ENCODE measurements at regions of chr11 and their contacts with region 1.

Region 1: DNA sequence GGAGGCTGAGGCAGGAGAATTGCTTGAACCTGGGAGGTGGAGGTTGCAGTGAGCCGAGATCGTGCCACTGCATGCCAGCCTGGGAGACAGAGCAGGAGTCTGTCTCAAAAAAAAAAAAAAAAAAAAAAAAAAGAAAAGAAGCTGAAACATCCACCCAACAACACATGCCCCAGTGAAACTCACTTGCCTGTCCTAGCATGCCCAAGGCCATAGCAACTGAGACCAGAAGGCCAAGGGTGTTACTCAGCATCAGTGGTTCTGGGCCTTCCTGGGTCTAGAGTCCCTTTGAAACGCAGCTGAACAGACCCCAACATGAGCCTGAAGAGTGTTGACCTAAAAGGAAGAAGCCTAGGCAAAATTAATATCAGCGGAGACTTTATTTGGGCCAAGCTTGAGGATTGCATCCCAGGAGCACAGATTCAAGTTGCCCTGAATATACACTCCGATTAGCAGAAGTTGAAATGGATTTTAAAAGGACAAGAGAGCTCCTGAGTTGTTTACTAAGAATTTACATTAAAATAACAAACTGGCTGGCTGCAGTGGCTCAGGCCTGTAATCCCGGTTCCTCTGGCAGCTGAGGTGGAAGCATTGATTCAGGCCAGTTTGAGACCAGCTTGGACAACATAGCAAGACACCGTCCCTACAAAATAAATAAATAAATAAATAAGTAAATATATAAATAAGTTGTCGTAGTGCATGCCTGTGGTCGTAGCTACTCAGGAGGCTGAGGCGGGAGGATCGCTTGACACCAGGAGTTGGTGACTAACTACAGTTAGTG is 7.0 kb downstream of the PRDX5 start:
- DNase-seq: no peak
- ATAC-seq: peak; percentile 66
- H3K4me3 ChIP-seq: no peak overlapping the region
- H3K27ac ChIP-seq: no peak overlapping the region
- H3K4me1 ChIP-seq: no peaks in the 10 kb centered on the region
- H3K27me3 ChIP-seq: no peaks in the 10 kb centered on the region
- CTCF ChIP-seq: no peak
- EP300 ChIP-seq: no peak
- POLR2A ChIP-seq: no peak
- RAD21 ChIP-seq: no peak

Region 2: DNA sequence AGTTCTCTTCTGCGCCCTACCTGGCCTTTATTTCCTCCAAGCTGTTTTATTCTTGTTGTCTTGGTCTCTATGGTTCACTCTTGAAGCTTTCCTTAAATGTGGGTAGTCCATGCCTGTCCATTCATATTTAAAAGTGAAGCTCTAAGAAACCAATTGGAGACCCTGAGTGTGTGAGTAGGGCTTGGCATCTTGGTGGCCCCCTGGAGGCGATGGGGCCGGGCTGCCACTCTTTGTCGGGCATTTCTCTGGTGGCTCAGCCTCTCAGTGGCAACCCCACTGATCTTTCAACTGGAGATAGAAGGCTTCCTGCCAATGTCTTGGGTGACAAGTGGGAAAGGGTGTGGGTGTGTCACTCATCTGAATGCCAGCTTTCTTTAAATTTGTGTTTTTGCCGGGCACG is 108.0 kb before region 1 on chr11:
- CTCF ChIA-PET with region 1: no interaction called
- POLR2A ChIA-PET with region 1: interaction called, 11 read pairs
- RAD21 ChIA-PET with region 1: no interaction called
- SMC1A ChIA-PET with region 1: no interaction called
- in situ Hi-C with region 1: no loop called
- intact Hi-C with region 1: no loop called
- DNase-seq: no peak
- ATAC-seq: peak; percentile 25; the same call in 1 of the 3 replicates
- H3K4me3 ChIP-seq: no peak overlapping the region
- H3K27ac ChIP-seq: no peak overlapping the region
- H3K4me1 ChIP-seq: no peaks in the 10 kb centered on the region; the same call in 1 of the 2 replicates
- H3K27me3 ChIP-seq: no peaks in the 10 kb centered on the region
- CTCF ChIP-seq: no peak
- EP300 ChIP-seq: no peak
- POLR2A ChIP-seq: no peak
- RAD21 ChIP-seq: no peak

Region 3: GRCh38 chr11:64251016-64251752 is 73.7 kb before region 1 on chr11 and contains the start of gene PLCB3:
- CTCF ChIA-PET with region 1: no interaction called
- POLR2A ChIA-PET with region 1: no interaction called
- RAD21 ChIA-PET with region 1: no interaction called
- SMC1A ChIA-PET with region 1: no interaction called
- in situ Hi-C with region 1: no loop called
- intact Hi-C with region 1: no loop called
- DNase-seq: no peak
- ATAC-seq: peak; percentile 68
- H3K4me3 ChIP-seq: peak within 1 kb of the TSS; percentile 66
- H3K27ac ChIP-seq: no peak within 1 kb of the TSS
- H3K4me1 ChIP-seq: peaks cover 10% of the 10 kb centered on the region
- H3K27me3 ChIP-seq: no peaks in the 10 kb centered on the region
- CTCF ChIP-seq: peak; percentile 59 to 71 (median 70)
- EP300 ChIP-seq: no peak
- POLR2A ChIP-seq: peak; percentile 74
- RAD21 ChIP-seq: peak; percentile 29
- polyA plus RNA-seq, gene PLCB3: 0.03 to 0.18 TPM